ENCODE measurements at regions of chr3 and their contacts with region 1.

Region 1: DNA sequence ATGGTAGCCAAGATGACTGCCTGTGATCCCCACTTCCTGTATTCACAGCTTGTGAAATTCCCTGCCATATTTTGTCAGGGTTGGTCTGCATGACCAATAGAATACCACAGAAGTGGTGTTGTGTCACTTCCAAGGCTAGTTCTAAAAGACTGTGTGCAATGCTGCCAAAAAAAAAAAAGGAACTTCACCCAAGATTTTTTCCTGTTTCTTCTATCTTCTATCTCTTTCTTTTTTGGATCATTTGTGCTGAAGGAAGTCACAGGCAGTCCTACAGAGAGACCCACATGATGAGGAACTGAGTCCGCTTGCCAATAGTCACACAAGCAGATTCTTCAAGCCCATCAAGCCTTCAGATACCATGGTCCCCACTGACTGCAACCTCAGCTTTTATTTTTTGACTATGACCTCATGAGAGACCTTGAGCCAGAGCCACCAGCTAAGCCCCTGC is 18.1 kb upstream of the RAF1 start:
- DNase-seq: peak; percentile 73
- H3K4me3 ChIP-seq: no peak overlapping the region
- H3K27ac ChIP-seq: no peak overlapping the region
- H3K4me1 ChIP-seq: peaks cover 24% of the 10 kb centered on the region
- H3K27me3 ChIP-seq: no peaks in the 10 kb centered on the region
- CTCF ChIP-seq: no peak

Region 2: DNA sequence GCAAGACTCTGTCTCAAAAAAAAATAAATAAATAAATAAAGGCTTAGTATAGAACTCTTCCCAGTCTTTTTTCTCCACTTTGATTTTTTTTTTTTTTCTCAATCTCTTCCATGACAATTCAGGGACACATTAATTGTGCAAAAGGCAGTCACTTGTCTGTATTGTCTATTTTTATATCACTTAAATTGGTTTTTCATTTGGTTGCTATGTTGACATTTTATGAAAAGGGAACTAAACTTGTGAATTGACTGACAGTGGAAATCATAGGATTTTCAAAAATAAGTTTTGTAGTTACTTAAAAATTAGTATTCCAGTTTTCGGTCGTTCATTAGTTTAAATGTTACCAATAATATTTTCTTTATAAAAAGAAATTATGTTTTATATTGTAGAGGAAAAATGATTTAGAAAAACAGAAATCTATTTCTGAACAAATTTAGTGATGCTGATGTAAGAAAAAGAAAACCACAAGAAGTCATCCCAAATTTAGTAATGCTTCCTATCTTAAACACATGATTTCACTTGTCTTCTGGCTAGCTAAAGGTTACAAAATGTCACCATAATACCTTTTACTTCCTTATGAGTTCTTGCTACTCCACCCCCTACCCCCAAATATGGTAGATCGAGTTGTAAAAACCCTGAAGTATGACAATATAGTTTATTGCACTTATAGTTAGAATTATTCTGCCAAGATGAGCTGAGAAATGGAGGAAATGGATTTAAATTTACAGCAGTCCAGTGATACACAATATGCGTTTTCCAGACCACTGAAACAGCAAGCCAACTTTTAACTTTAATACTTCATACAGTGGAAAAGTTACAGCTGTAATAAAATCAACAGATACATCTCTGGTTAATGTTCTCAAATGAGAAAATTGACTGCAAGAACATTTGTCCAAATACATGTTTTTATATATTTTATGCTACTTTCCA is 356.1 kb before region 1 on chr3:
- CTCF ChIA-PET with region 1: no interaction called
- dilution Hi-C with region 1: no loop called
- in situ Hi-C with region 1: no loop called
- intact Hi-C with region 1: no loop called
- DNase-seq: no peak
- H3K4me3 ChIP-seq: no peak overlapping the region
- H3K27ac ChIP-seq: no peak overlapping the region
- H3K4me1 ChIP-seq: no peaks in the 10 kb centered on the region
- H3K27me3 ChIP-seq: peaks cover 3% of the 10 kb centered on the region
- CTCF ChIP-seq: no peak

Region 3: DNA sequence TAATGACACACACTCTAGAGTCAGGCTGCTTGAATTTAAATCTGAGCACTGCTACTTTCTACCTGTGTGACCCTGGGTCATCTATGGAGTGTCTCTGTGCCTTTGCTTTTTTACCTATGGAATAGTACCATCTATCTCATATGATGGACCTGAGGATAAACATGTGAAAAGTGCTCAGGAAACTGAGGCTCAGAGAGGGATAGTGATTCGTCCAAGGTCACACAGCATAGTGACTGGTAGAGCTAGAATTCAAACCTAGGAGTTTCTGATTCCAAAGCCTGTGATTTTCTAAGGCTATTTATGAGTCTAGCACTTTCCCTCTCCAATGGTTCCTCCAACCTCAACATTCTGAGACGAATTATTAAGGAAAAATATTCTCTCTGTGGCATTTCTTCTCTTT is 13.9 kb after region 1 on chr3:
- CTCF ChIA-PET with region 1: interaction called, 5 read pairs
- dilution Hi-C with region 1: no loop called
- in situ Hi-C with region 1: no loop called
- intact Hi-C with region 1: loop called (anchors 1 kb)
- DNase-seq: no peak
- H3K4me3 ChIP-seq: no peak overlapping the region
- H3K27ac ChIP-seq: no peak overlapping the region
- H3K4me1 ChIP-seq: no peaks in the 10 kb centered on the region
- H3K27me3 ChIP-seq: no peaks in the 10 kb centered on the region
- CTCF ChIP-seq: no peak

Region 4: DNA sequence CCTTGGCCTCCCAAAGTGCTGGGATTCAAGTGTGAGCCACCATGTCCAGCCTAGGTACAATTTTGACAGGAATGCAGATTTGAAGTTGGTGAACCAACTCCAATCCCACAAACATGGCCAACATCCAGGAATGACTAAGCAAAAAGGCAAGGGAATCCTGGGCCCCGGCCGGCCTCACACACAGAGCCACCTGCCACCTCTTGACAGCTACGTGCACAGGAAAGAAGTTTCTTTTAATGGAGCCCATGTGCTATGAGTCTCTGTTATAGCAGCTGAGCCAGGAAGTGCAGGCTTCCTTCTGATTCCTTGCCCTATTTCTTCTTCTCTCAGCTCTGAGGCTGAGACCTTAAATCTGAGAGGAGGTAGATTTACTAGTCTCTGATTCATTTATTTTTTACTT is 68.3 kb after region 1 on chr3:
- CTCF ChIA-PET with region 1: no interaction called
- dilution Hi-C with region 1: loop called (anchors 5 kb)
- in situ Hi-C with region 1: no loop called
- intact Hi-C with region 1: no loop called
- DNase-seq: peak; percentile 76
- H3K4me3 ChIP-seq: no peak overlapping the region
- H3K27ac ChIP-seq: peak overlapping the region; percentile 61
- H3K4me1 ChIP-seq: peaks cover 44% of the 10 kb centered on the region
- H3K27me3 ChIP-seq: no peaks in the 10 kb centered on the region
- CTCF ChIP-seq: no peak